Panc1 (cell line): ENCODE measurements at regions of chr15 and their contacts with region 1.

Region 1: GRCh38 chr15:66940368-66940767 is 125.0 kb upstream of the SMAD3 start:
- DNase-seq: no peak
- ATAC-seq: 0 out of 2 replicates have a peak, but pooled peaks have one; percentile 4
- H3K4me3 ChIP-seq: no peak overlapping the region
- H3K27ac ChIP-seq: peak overlapping the region; percentile 100
- H3K4me1 ChIP-seq: peaks cover 57% of the 10 kb centered on the region
- H3K27me3 ChIP-seq: no peaks in the 10 kb centered on the region
- CTCF ChIP-seq: no peak

Region 2: DNA sequence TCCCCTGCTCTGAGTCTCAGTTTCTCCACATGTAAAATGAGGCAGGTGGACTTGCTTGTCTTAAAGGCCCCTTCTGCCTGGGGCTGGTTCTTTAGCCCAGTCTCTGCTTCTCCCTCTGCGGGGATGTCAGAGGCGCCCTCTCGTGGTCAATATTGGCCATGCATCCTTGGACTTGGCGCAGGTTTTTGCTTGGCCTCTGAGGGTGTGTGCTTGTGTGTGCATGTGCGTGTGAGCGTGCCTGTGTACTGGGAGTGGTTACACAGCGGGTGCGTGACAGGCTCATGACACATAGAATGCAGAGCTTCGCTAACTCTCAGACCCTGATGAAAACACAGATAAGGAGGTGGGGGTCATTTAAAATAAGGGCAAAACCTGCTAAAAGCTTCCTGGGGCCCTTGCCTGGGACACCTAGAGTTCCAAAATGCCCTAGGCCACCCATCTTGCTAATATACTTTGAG is 77.5 kb before region 1 on chr15:
- CTCF ChIA-PET with region 1: interaction called, 5 read pairs
- POLR2A ChIA-PET with region 1: no interaction called
- in situ Hi-C with region 1: no loop called
- intact Hi-C with region 1: loop called (anchors 5 kb)
- DNase-seq: peak; percentile 64
- ATAC-seq: peak; percentile 83
- H3K4me3 ChIP-seq: no peak overlapping the region
- H3K27ac ChIP-seq: peak overlapping the region; percentile 90
- H3K4me1 ChIP-seq: peaks cover 56% of the 10 kb centered on the region
- H3K27me3 ChIP-seq: no peaks in the 10 kb centered on the region
- CTCF ChIP-seq: peak; percentile 97

Region 3: GRCh38 chr15:66907826-66908743 is 32.3 kb before region 1 on chr15:
- CTCF ChIA-PET with region 1: interaction called, 3 read pairs
- POLR2A ChIA-PET with region 1: no interaction called
- in situ Hi-C with region 1: no loop called
- intact Hi-C with region 1: loop called (anchors 5 kb)
- DNase-seq: no peak
- ATAC-seq: peak; percentile 81
- H3K4me3 ChIP-seq: peak overlapping the region in 1 of 2 experiments; percentile 2; a peak in 1 of 4 replicates
- H3K27ac ChIP-seq: peak overlapping the region; percentile 85
- H3K4me1 ChIP-seq: peaks cover 28% of the 10 kb centered on the region
- H3K27me3 ChIP-seq: no peaks in the 10 kb centered on the region
- CTCF ChIP-seq: no peak

Region 4: DNA sequence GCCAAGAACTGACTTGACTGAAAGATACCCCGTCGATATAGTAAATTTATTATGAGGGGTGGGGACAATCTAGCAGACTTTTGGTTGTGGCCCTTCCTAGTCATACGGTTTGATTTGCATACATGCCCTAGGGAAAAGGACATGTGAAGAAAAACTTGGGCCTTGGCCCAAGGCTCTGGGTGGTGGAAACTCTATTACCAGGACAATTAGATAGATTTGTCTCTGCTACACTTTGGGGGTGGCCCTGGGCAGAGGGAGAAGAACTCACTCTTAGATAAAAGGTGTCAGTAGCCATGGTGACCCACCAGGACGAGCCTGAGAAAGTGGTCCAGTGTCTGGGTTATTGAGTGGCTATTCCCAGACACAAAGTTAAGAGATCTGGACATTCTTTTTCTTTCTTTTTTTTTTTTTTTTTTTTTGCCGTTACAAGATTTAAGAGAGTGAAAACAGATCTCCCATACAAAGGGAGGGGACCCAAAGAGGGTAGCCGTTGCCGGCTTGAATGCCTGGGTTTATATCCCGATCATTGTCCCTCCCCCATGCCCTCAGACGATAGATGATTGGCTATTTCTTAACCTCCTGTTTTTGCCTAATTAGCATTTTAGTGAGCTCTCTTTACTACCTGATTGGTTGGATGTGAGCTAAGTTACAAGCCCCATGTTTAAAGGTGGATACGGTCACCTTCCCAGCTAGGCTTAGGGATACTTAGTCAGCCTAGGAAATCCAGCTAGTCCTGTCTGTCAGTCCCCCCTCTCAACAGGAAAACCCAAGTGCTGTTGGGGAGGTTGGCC is 28.6 kb after region 1 on chr15:
- CTCF ChIA-PET with region 1: no interaction called
- POLR2A ChIA-PET with region 1: no interaction called
- in situ Hi-C with region 1: no loop called
- intact Hi-C with region 1: no loop called
- DNase-seq: no peak
- ATAC-seq: no peak
- H3K4me3 ChIP-seq: no peak overlapping the region
- H3K27ac ChIP-seq: no peak overlapping the region
- H3K4me1 ChIP-seq: no peaks in the 10 kb centered on the region
- H3K27me3 ChIP-seq: no peaks in the 10 kb centered on the region
- CTCF ChIP-seq: no peak

Region 5: GRCh38 chr15:67196672-67197363 is 256.4 kb after region 1 on chr15:
- CTCF ChIA-PET with region 1: interaction called, 3 read pairs
- POLR2A ChIA-PET with region 1: no interaction called
- in situ Hi-C with region 1: no loop called
- intact Hi-C with region 1: loop called (anchors 5 kb)
- DNase-seq: no peak
- ATAC-seq: peak; percentile 69
- H3K4me3 ChIP-seq: no peak overlapping the region
- H3K27ac ChIP-seq: peak overlapping the region; percentile 80
- H3K4me1 ChIP-seq: peaks cover 70% of the 10 kb centered on the region
- H3K27me3 ChIP-seq: no peaks in the 10 kb centered on the region
- CTCF ChIP-seq: no peak